Left cardiac atrium (tissue), 4 donors: ENCODE measurements at regions of chr9 and their contacts with region 1.

Region 1: GRCh38 chr9:3647652-3648051 is 121.9 kb upstream of the RFX3 start:
- DNase-seq: no peak
- ATAC-seq: no peak

Region 2: DNA sequence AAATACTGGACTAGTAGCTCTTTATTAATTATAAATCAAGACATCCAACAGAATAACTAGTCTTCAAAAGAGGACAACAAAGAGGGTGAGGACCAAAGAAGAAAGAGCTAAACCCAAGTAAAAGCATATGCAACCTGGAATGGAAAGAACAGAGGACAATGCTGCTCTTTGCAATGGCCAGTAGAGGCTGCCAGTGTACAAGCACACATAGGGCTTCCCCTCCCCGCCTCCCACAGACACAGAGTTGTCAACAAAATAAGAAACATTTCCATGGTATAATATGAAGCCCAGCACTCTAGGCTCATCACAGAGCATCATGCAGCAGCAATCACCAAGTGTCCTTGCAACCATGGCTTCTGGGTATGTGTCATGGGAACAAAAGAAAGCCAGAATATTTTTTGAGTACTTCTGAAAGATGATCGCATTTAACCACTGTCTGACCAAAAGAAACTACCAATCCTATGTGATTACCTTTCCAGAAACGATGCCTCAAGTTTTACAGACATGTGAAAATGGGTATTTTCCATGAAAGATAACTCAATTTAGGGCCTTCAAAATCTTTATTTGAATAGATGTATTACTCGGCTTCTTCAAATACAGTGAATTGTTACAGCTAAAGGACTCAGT is 179.9 kb before region 1 on chr9:
- intact Hi-C with region 1: loop called in 1 of 2 experiments (anchors 5 kb)
- DNase-seq: peak; percentile 60
- ATAC-seq: peak; percentile 92 to 95

Region 3: DNA sequence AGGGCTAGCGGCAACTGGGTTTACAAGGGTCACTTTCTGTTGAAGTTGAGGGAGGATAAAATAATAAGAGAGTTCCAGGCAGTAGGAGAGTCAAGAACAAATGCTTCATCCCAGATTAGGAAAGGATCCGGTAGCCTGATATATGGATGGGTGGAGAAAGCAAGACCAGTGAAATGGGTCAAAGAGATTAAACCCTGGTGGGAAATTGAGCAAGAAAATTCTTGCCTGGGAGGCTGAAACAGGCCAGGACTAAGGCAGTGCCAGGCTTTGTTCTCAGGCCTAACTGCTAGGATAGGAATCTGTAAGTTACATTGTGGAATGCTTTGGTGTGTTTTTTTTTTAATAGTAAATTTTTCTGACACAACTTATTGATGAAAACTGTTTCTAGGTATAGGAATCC is 135.5 kb after region 1 on chr9:
- intact Hi-C with region 1: no loop called
- DNase-seq: no peak
- ATAC-seq: no peak